ENCODE measurements at regions of chr1 and their contacts with region 1.

Region 1: GRCh38 chr1:46724991-46725735 is 6.2 kb upstream of the EFCAB14 start:
- DNase-seq: peak; percentile 77
- H3K4me3 ChIP-seq: no peak overlapping the region
- H3K27ac ChIP-seq: no peak overlapping the region
- H3K4me1 ChIP-seq: peaks cover 0 to 3% (median 0%) of the 10 kb centered on the region in 4 donors
- H3K27me3 ChIP-seq: peaks cover 27% of the 10 kb centered on the region
- CTCF ChIP-seq: peak; percentile 80 to 87 (median 85)
- EP300 ChIP-seq: no peak
- POLR2A ChIP-seq: no peak

Region 2: DNA sequence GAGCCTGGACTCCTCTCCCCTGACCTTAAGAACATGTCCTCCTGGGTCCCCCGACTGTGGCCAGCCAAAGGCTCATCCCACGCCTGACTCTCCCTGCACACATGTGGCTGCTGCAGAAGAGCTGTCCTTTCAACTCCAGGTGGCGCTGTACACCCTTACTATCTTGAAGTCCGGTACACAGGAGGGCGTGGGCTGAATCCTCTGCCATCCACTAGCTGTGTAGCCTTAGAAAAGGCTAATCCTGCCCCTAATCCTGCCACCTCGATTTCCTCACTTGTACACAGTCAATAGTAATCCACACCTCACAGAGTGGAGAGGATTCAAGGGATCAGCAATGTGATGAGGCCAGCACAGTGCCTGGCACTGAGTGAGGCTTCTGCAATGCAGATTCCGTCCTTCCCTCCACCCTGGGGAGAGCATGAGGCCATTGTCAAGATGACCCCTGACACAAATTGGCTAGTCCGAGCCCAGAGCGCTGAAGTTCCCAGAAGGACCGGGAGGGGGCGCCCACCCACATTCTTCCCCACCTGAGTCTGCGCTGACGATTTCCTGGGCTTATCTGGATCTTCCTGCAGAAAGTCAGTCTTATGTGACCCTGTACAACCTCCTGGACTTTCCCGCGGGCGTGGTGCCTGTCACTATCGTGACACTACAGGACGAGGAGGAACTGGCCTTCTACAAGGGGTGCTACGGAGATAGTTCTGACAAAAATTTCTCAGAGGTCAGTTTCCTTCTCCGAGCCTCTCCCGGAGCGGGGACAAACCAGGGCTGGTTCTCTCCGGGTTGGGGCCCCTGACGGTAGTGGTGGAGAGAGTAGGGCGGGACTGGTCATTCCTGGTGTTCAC is 282.6 kb before region 1 on chr1:
- in situ Hi-C with region 1: loop called in 1 of 4 experiments (anchors 25 kb)
- intact Hi-C with region 1: no loop called
- DNase-seq: peak; percentile 85
- H3K4me3 ChIP-seq: peak overlapping the region in 3 of 4 donors; percentile 16 to 40 (median 19)
- H3K27ac ChIP-seq: peak overlapping the region in 2 of 4 donors; percentile 31 to 52
- H3K4me1 ChIP-seq: peaks cover 0 to 10% (median 5%) of the 10 kb centered on the region in 4 donors
- H3K27me3 ChIP-seq: peaks cover 26% of the 10 kb centered on the region
- CTCF ChIP-seq: peak; percentile 85 to 94 (median 91)
- EP300 ChIP-seq: no peak
- POLR2A ChIP-seq: no peak

Region 3: DNA sequence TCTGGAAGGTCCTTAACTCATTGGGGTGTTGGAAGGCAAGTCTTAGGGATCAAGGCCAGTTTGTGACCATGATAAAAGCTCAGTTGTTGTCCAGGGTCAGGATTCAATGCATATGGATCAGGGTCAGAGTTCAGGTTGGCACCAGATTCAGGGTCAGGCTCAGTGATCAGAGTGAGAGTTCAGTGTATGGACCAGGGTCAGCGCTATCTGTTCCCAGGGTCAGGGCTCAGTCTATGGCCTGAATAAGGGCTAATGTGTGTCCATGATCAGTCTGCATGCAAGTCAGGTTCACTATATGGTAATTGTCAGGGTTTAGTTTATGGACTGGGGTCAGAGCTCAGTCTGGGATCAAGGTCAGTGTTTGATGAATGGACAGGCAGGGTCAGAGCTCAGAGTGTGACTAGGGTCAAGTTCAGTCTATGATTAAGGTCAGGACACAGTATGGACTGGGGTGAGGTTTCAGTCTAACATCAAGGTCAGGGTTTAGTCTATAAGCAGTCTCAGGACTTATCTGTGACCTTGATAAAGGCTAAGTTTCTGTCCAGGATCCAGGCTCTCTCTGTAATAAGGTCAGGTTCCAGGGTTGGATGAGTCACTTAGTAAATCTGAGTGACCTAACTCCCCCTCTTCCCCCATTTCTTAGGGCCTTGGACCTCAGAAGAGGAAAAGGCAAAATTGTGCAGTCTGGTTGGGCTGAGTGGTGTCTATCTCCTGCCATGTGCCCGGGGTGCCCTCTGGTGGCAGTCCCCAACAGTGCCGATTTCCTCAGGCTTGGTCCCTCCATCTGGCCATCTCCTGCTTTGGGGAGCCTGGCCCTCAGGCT is 197.5 kb before region 1 on chr1:
- in situ Hi-C with region 1: loop called in 1 of 4 experiments (anchors 10 kb)
- intact Hi-C with region 1: loop called (anchors 5 kb)
- DNase-seq: peak; percentile 85
- H3K4me3 ChIP-seq: no peak overlapping the region
- H3K27ac ChIP-seq: peak overlapping the region in 2 of 4 donors; percentile 1 to 43
- H3K4me1 ChIP-seq: peaks cover 0 to 17% (median 3%) of the 10 kb centered on the region in 4 donors
- H3K27me3 ChIP-seq: peaks cover 46% of the 10 kb centered on the region
- CTCF ChIP-seq: peak; percentile 90 to 94 (median 93)
- EP300 ChIP-seq: no peak
- POLR2A ChIP-seq: no peak

Region 4: DNA sequence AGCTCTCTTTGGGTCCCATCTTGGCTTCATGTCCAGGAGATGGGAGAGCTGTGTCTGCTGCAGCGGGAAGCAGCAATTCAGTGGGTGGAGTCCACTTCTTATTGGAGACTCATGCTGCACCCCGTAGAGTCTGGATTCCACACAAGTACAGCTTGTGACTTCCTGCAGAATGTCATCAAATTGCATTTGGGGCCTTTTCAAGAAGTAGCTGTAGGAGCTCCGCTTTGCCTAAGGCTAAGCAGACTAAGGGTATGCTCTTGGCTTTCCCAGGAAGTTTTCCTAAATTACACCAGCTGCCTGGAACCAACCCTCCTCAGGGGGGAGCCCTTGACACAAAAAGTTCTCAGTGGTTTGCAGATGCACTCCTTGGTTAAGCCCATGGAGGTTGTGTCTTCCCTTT is 102.8 kb before region 1 on chr1:
- in situ Hi-C with region 1: loop called in 2 of 4 experiments (anchors 10 kb)
- intact Hi-C with region 1: loop called (anchors 1 kb)
- DNase-seq: peak; percentile 60
- H3K4me3 ChIP-seq: no peak overlapping the region
- H3K27ac ChIP-seq: peak overlapping the region in 3 of 4 donors; percentile 10 to 41 (median 31)
- H3K4me1 ChIP-seq: peaks cover 2 to 14% (median 7%) of the 10 kb centered on the region in 4 donors
- H3K27me3 ChIP-seq: no peaks in the 10 kb centered on the region
- CTCF ChIP-seq: peak; percentile 51 to 69 (median 61)
- EP300 ChIP-seq: no peak
- POLR2A ChIP-seq: no peak

Region 5: DNA sequence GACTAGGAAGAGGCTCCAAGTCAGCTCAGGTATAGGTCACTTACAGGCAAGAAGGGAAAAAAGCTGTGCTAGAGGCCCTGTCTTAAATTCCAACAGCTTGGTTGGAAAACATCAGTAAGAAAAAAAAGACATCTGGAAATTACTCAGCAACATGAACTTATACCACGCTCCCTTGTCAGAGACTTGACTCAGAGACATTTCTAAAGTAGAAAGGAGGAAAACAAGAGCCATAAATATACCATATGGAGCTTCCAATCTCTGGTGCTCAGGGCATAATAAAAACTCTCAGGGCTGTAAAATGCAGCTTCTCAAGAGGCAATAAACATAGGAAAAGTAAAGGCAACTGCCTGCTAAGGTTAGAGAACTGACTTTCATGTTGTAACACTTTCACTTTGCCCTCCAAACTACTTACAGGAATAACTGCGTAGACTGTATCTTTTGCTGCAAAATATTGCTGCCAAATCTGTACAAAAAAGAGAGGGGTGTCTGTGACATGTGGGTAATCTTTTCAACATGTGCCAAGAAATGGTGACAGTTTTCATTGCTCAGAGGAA is 71.7 kb before region 1 on chr1:
- in situ Hi-C with region 1: no loop called
- intact Hi-C with region 1: no loop called
- DNase-seq: no peak
- H3K4me3 ChIP-seq: peak overlapping the region in 3 of 4 donors; percentile 16 to 34 (median 18)
- H3K27ac ChIP-seq: peak overlapping the region; percentile 72 to 86 (median 78)
- H3K4me1 ChIP-seq: peaks cover 0 to 23% (median 14%) of the 10 kb centered on the region in 4 donors
- H3K27me3 ChIP-seq: no peaks in the 10 kb centered on the region
- CTCF ChIP-seq: no peak
- EP300 ChIP-seq: no peak
- POLR2A ChIP-seq: no peak

Region 6: DNA sequence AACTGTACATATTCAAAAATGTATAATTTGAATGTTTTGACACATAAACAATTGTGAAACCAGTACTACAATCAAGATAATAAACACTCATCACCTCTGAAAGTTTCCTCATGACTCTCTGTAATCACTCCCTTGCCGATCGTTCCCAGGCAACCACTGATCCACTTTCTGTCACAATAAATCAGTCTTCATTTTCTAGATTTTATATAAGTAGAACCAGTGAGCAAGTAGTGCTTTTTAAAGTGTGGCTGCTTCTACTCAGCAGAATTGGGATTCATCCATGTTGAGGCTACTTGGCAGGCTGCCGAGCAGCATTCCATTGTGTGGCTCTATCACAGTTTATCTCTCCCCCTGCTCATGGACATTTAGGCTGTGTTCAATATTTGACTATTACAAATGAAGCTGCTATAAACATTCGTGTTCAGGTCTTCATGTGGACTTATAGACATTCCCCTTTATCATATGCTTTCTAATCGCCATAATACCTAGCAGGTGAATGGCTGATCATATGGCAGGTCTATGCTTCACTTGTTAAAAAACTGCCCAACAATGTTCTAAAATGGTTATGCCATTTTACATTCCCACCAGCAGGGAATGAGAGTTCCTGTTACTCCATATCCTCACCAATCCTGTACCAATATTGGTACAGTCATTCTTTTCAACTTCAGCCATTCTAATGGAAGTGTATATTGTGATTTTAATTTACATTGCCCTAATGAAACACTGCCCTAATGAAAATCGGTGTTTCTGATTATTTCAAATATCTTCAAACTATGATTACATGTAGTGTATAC is 33.0 kb before region 1 on chr1:
- in situ Hi-C with region 1: no loop called
- intact Hi-C with region 1: no loop called
- DNase-seq: no peak
- H3K4me3 ChIP-seq: no peak overlapping the region
- H3K27ac ChIP-seq: no peak overlapping the region
- H3K4me1 ChIP-seq: peaks cover 11 to 54% (median 20%) of the 10 kb centered on the region in 4 donors
- H3K27me3 ChIP-seq: no peaks in the 10 kb centered on the region
- CTCF ChIP-seq: peak in 1 of 5 experiments; percentile 20
- EP300 ChIP-seq: no peak
- POLR2A ChIP-seq: no peak

Region 7: DNA sequence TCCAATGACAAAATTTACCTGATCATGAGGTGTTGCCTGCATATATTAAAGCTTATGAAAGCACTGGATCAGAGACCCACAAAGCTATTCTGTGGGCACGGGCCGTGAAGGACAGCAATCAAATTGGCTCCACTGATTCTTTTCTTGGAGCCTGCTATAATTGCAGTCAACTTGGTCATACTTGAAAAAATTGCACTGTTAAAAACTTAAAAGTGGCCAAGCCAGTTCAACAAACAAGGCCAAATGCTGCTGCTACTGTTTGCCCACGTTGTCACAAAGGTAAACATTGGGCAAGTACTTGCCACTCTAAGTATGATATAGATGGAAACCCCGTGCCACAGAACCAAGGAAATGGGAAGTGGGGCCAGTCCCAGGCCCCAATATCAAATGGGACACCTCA is 178.3 kb after region 1 on chr1:
- in situ Hi-C with region 1: no loop called
- intact Hi-C with region 1: no loop called
- DNase-seq: no peak
- H3K4me3 ChIP-seq: no peak overlapping the region
- H3K27ac ChIP-seq: no peak overlapping the region
- H3K4me1 ChIP-seq: no peaks in the 10 kb centered on the region
- H3K27me3 ChIP-seq: no peaks in the 10 kb centered on the region
- CTCF ChIP-seq: no peak
- EP300 ChIP-seq: no peak
- POLR2A ChIP-seq: no peak

Measured in transverse colon (tissue), 4 donors.